Activated CD4-positive, alpha-beta memory T cell treated with anti-CD3 and anti-CD28 coated beads for 36 hours (primary cell): ENCODE measurements at regions of chr6 and their contacts with region 1.

Region 1: DNA sequence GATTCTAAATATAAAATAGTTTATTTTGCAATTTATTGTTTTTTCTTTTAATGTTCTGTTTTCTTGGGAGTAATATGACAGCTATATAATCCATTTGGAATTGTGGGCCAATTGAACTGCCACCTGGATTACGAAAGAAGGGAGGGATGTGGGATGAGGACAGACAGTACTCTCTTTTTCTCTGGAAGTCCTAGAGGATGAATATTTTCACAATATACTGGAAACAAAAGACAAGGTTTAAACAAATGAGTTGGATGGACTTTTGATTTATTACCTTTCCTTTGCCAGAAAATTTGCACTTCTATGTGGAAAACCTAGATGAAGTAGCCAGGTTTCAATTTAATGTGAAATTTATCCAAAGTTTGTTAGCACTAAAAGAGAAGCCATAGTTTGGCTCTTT is 325.5 kb upstream of the IMPG1 start:
- DNase-seq: no peak
- H3K4me3 Mint-ChIP-seq: no peak overlapping the region
- H3K27ac Mint-ChIP-seq: no peak overlapping the region
- H3K4me1 Mint-ChIP-seq: no peaks in the 10 kb centered on the region
- H3K27me3 Mint-ChIP-seq: no peaks in the 10 kb centered on the region

Region 2: GRCh38 chr6:76381612-76382011 is 16.4 kb before region 1 on chr6:
- CTCF ChIA-PET with region 1: no interaction called
- POLR2A ChIA-PET with region 1: no interaction called
- intact Hi-C with region 1: loop called (anchors 1 kb)
- DNase-seq: no peak
- H3K4me3 Mint-ChIP-seq: no peak overlapping the region
- H3K27ac Mint-ChIP-seq: no peak overlapping the region
- H3K4me1 Mint-ChIP-seq: no peaks in the 10 kb centered on the region
- H3K27me3 Mint-ChIP-seq: no peaks in the 10 kb centered on the region

Region 3: DNA sequence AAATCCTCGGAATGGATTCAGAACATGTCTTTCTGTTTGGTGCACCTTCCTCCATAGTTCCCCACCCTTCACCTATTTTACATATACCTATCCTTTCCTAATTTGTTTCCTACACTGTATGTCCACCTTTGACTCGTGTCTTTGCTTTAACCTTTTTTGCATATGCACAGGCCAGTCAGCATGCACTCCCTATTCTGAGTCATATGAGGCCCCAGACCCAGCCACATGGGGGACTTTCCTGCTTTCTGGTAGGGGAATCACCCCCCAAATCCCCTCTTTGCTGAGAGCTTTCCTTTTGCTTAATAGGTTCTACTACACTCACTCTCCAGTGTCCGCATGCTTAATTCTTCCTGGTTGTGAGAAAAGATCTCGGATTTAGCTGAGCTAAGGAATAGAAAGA is 68.3 kb after region 1 on chr6:
- CTCF ChIA-PET with region 1: no interaction called
- POLR2A ChIA-PET with region 1: no interaction called
- intact Hi-C with region 1: no loop called
- DNase-seq: no peak
- H3K4me3 Mint-ChIP-seq: no peak overlapping the region
- H3K27ac Mint-ChIP-seq: no peak overlapping the region
- H3K4me1 Mint-ChIP-seq: no peaks in the 10 kb centered on the region
- H3K27me3 Mint-ChIP-seq: no peaks in the 10 kb centered on the region

Region 4: GRCh38 chr6:76644231-76644630 is 246.3 kb after region 1 on chr6:
- CTCF ChIA-PET with region 1: no interaction called
- POLR2A ChIA-PET with region 1: no interaction called
- intact Hi-C with region 1: no loop called
- DNase-seq: no peak
- H3K4me3 Mint-ChIP-seq: no peak overlapping the region
- H3K27ac Mint-ChIP-seq: no peak overlapping the region
- H3K4me1 Mint-ChIP-seq: no peaks in the 10 kb centered on the region
- H3K27me3 Mint-ChIP-seq: no peaks in the 10 kb centered on the region

Region 5: DNA sequence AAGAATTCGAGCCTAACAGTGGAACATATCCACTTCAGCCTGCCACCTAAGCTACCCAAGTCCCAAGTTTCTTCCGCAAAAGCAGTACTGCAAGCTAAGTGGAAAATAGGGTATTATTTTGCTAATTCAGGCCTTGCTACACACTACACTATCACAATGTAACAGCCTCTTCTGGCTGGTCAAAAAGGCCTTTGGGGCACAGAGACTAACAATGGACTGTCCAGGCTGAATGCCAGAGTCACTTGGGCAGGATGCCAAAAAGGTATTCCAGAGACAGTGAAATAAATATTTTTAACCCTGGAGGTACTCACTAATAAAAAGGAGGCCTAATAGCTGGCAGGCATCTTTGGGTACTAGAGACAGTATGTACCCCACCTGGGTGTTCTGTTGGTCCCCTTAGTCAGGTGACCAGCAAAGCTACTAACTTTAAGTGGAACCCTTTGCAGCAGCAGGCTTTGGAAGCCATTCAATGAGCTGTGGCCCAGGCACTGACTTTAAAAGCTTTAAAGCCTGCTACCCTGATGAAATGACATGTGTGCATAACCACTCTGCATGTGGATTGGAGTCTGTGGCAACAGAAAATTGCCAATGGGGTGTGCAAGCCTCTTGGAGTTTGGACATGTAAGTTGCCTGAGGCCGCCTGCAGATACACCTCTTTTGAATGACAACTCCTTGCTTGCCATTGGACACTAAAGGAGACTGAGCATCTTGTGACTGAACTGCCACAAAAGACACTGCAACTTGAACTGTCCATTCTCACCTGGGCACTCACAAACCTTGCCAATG is 373.3 kb after region 1 on chr6:
- CTCF ChIA-PET with region 1: no interaction called
- POLR2A ChIA-PET with region 1: no interaction called
- intact Hi-C with region 1: no loop called
- DNase-seq: no peak
- H3K4me3 Mint-ChIP-seq: no peak overlapping the region
- H3K27ac Mint-ChIP-seq: no peak overlapping the region
- H3K4me1 Mint-ChIP-seq: no peaks in the 10 kb centered on the region
- H3K27me3 Mint-ChIP-seq: no peaks in the 10 kb centered on the region